ENCODE measurements at regions of chr20 and their contacts with region 1.

Region 1: GRCh38 chr20:50731055-50731871 is at the start of gene PARD6B:
- DNase-seq: peak; percentile 96 to 100
- H3K4me3 ChIP-seq: peak within 1 kb of the TSS; percentile 85
- H3K27ac ChIP-seq: peak within 1 kb of the TSS; percentile 91
- H3K4me1 ChIP-seq: peaks cover 71% of the 10 kb centered on the region
- H3K27me3 ChIP-seq: no peaks in the 10 kb centered on the region
- CTCF ChIP-seq: no peak
- total RNA-seq, gene PARD6B: 52.2 and 80.3 TPM in 2 replicates

Region 2: DNA sequence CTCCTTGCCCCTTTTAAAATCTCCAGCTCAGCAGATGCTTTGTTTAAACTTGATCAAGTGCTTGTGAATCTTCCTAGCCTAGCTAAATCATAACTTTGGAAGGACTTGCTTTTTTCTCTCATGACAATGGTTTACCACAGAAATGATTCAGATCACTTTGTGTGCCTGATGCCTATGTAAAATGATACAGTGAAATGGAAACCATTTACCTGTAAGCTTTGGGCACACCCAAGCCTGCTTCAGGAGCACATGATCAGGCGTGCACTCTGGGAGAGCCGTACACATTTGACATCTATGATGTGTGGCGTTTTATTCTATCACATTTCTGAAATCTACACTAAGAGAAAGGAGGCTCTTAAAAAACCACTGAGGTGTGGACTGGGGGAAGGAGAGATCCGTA is 180.0 kb before region 1 on chr20:
- CTCF ChIA-PET with region 1: no interaction called
- POLR2A ChIA-PET with region 1: no interaction called
- intact Hi-C with region 1: no loop called
- DNase-seq: no peak
- H3K4me3 ChIP-seq: no peak overlapping the region
- H3K27ac ChIP-seq: no peak overlapping the region
- H3K4me1 ChIP-seq: no peaks in the 10 kb centered on the region
- H3K27me3 ChIP-seq: no peaks in the 10 kb centered on the region
- CTCF ChIP-seq: no peak

Region 3: DNA sequence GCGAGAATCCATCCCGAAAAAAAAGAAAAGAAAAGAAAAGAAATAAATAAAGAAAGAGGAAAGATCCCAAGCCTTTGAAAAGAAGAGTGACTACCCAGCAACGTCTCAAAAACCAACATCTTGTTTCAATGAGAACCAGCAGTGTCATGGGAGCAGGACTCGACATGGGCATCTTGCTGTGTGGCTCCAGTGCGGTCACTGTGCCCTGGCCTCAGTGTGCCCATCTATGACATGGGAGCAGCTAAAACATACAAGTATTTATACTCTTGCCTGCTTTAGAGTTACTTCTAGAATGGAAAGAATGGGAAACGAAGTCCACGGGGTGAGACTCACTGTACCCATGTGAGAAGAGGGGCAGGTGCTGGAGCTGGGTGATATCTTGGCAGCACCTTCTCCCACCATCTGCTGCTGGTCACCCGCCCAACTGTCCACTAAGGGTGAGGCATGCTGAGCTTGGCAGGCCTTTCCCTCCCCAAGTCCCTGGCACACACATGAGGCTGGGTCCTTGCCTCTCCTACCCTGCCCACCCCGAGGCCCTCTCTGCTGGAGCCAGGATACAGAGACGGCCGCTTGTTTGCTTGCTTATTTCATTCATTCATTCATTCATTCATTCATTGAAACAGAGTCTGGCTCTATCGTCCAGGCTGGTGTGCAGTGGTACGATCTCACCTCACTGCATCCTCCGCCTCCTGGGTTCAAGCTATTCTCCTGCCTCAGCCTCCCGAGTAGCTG is 117.7 kb before region 1 on chr20:
- CTCF ChIA-PET with region 1: interaction called, 14 read pairs
- POLR2A ChIA-PET with region 1: no interaction called
- intact Hi-C with region 1: no loop called
- DNase-seq: no peak
- H3K4me3 ChIP-seq: no peak overlapping the region
- H3K27ac ChIP-seq: no peak overlapping the region
- H3K4me1 ChIP-seq: peaks cover 7% of the 10 kb centered on the region
- H3K27me3 ChIP-seq: no peaks in the 10 kb centered on the region
- CTCF ChIP-seq: no peak

Region 4: GRCh38 chr20:50625986-50626677 is 105.1 kb before region 1 on chr20:
- CTCF ChIA-PET with region 1: no interaction called
- POLR2A ChIA-PET with region 1: interaction called, 4 read pairs
- intact Hi-C with region 1: loop called (anchors 1 kb)
- DNase-seq: peak in 1 of 2 experiments; percentile 65
- H3K4me3 ChIP-seq: no peak overlapping the region
- H3K27ac ChIP-seq: no peak overlapping the region
- H3K4me1 ChIP-seq: peaks cover 45% of the 10 kb centered on the region
- H3K27me3 ChIP-seq: no peaks in the 10 kb centered on the region
- CTCF ChIP-seq: peak; percentile 72

Region 5: GRCh38 chr20:50652702-50653294 is 78.5 kb before region 1 on chr20:
- CTCF ChIA-PET with region 1: no interaction called
- POLR2A ChIA-PET with region 1: no interaction called
- intact Hi-C with region 1: no loop called
- DNase-seq: peak in 1 of 2 experiments; percentile 51
- H3K4me3 ChIP-seq: no peak overlapping the region
- H3K27ac ChIP-seq: no peak overlapping the region
- H3K4me1 ChIP-seq: peaks cover 10% of the 10 kb centered on the region
- H3K27me3 ChIP-seq: no peaks in the 10 kb centered on the region
- CTCF ChIP-seq: no peak

Region 6: DNA sequence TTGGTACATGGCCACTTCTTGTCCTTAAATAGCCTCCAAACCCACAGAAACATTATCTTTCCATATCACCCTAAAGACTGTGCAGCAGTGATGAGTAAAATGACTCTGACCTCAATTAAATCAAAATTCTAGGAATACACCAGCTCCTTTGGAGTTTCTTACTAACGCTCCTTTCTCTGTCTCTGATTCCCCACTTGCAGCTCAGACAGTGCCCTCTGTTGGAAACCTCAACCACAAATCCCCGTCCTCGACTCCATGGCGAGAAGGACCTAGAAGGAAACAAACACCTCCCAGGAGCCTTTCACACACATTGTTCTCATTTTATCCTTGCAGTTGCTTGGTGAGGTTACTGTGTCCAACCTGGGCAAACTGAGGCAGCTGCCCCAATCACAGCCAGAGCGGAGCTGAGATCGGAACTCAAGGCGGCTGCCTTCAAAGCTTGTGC is 17.6 kb before region 1 on chr20:
- CTCF ChIA-PET with region 1: interaction called, 6 read pairs
- POLR2A ChIA-PET with region 1: interaction called, 12 read pairs
- intact Hi-C with region 1: no loop called
- DNase-seq: no peak
- H3K4me3 ChIP-seq: no peak overlapping the region
- H3K27ac ChIP-seq: no peak overlapping the region
- H3K4me1 ChIP-seq: peaks cover 93% of the 10 kb centered on the region
- H3K27me3 ChIP-seq: no peaks in the 10 kb centered on the region
- CTCF ChIP-seq: no peak

Region 7: DNA sequence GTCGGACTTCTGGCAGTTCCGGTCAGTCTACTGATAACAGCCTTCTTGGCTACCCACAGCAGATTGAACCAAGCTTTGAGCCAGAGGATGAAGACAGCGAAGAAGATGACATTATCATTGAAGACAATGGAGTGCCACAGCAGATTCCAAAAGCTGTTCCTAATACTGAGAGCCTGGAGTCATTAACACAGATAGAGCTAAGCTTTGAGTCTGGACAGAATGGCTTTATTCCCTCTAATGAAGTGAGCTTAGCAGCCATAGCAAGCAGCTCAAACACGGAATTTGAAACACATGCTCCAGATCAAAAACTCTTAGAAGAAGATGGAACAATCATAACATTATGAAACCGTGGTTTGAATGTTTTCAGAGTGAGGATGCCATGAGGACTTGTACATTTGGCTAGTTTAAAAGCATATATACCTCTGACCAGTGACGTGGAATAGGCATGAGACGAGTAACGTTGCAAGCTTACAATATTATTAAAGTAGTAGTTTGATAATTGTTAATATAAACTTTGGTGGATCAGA is 18.9 kb after region 1 on chr20:
- CTCF ChIA-PET with region 1: interaction called, 8 read pairs
- POLR2A ChIA-PET with region 1: interaction called, 11 read pairs
- intact Hi-C with region 1: no loop called
- DNase-seq: no peak
- H3K4me3 ChIP-seq: no peak overlapping the region
- H3K27ac ChIP-seq: no peak overlapping the region
- H3K4me1 ChIP-seq: peaks cover 36% of the 10 kb centered on the region
- H3K27me3 ChIP-seq: no peaks in the 10 kb centered on the region
- CTCF ChIP-seq: no peak

Region 8: DNA sequence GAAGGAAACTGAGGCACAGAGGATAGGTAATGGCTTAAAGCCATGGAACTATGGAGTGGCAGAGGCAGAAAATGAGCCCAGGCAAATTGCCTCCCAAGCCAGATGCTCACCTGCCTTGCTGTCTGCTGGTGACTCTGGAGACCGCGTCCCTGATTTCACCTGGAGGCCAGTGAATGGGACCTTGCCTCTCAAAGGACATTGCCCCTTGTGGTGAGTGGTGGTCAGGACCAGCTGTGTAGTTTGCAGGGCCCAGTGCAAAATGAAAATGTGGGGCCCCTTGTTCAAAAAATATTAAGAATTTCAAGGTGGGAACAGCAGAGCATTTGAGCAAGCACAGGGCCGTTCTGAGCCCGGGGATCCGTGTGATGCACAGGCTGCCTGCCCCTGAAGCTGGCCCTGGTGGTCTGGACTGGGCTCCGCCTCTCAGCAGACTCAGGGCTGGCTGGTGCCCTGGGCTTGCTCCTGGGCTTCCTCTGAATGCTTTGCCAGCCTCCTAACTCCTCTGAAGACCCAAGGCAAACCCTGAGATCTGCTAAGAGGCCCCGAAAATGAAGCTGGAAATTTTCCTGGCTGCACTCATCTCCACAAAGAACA is 311.5 kb after region 1 on chr20:
- CTCF ChIA-PET with region 1: no interaction called
- POLR2A ChIA-PET with region 1: no interaction called
- intact Hi-C with region 1: no loop called
- DNase-seq: no peak
- H3K4me3 ChIP-seq: no peak overlapping the region
- H3K27ac ChIP-seq: no peak overlapping the region
- H3K4me1 ChIP-seq: no peaks in the 10 kb centered on the region
- H3K27me3 ChIP-seq: peaks cover 51% of the 10 kb centered on the region
- CTCF ChIP-seq: peak; percentile 44